ENCODE measurements at regions of chr5 and their contacts with region 1.

Region 1: DNA sequence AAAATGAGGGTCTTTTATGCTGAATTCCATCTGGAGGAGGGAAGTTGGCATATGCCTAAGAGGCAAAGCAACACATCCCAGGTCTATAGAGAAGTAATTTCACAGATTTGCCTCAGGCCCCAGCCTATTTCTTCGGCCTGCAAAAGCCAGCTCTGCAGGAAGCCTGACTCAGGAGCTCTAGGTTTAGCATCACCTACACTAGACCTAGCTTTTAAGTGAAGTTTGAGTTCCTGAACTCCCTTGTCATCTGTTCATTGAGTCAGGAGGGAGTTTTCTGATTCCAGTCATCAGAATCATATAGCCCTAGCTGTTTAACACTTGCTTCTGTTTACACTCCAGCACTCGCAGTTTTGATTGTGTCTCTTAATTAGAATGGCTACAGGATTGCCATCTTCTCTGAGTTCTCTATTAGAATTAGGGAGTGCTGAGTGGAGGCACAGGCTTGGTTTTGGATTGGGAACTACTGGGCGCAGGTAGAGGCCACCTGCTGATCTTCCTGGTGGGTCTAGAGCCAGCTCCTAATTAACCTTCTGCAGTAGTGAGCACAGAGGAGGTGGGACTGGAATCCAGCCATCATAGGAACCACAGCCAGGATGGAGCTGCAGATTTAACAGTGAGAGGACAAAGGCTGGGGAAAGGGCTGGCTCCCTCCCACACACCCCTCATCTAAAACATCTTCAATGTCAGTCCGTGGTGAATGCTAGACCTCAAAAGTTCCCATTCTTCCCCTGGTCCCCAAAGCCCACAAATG is 179.5 kb downstream of the TRIO start:
- DNase-seq: no peak
- H3K4me3 ChIP-seq: no peak overlapping the region
- CTCF ChIP-seq: no peak

Region 2: GRCh38 chr5:14342306-14342705 is 19.7 kb after region 1 on chr5:
- CTCF ChIA-PET with region 1: interaction called, 19 read pairs
- POLR2A ChIA-PET with region 1: no interaction called
- DNase-seq: no peak
- H3K4me3 ChIP-seq: no peak overlapping the region
- CTCF ChIP-seq: no peak